ENCODE measurements at regions of chr15 and their contacts with region 1.

Region 1: GRCh38 chr15:50865515-50866353 is 42.7 kb upstream of the AP4E1 start:
- DNase-seq: no peak
- H3K4me3 ChIP-seq: no peak overlapping the region
- H3K27ac ChIP-seq: no peak overlapping the region
- H3K4me1 ChIP-seq: peaks cover 0 to 3% (median 0%) of the 10 kb centered on the region in 4 experiments; a peak in 1 of 7 replicates
- H3K27me3 ChIP-seq: no peaks in the 10 kb centered on the region
- CTCF ChIP-seq: no peak
- EP300 ChIP-seq: no peak
- POLR2A ChIP-seq: no peak
- RAD21 ChIP-seq: no peak

Region 2: GRCh38 chr15:50876989-50877360 is 11.2 kb after region 1 on chr15:
- CTCF ChIA-PET with region 1: interaction called, 11 read pairs
- POLR2A ChIA-PET with region 1: interaction called, 3 read pairs
- DNase-seq: peak; percentile 58 to 93
- H3K4me3 ChIP-seq: no peak overlapping the region
- H3K27ac ChIP-seq: no peak overlapping the region
- H3K4me1 ChIP-seq: no peaks in the 10 kb centered on the region
- H3K27me3 ChIP-seq: no peaks in the 10 kb centered on the region
- CTCF ChIP-seq: peak; percentile 75 to 98 (median 85)
- EP300 ChIP-seq: no peak
- POLR2A ChIP-seq: no peak
- RAD21 ChIP-seq: peak; percentile 97